ENCODE measurements at regions of chr12 and their contacts with region 1.

Region 1: DNA sequence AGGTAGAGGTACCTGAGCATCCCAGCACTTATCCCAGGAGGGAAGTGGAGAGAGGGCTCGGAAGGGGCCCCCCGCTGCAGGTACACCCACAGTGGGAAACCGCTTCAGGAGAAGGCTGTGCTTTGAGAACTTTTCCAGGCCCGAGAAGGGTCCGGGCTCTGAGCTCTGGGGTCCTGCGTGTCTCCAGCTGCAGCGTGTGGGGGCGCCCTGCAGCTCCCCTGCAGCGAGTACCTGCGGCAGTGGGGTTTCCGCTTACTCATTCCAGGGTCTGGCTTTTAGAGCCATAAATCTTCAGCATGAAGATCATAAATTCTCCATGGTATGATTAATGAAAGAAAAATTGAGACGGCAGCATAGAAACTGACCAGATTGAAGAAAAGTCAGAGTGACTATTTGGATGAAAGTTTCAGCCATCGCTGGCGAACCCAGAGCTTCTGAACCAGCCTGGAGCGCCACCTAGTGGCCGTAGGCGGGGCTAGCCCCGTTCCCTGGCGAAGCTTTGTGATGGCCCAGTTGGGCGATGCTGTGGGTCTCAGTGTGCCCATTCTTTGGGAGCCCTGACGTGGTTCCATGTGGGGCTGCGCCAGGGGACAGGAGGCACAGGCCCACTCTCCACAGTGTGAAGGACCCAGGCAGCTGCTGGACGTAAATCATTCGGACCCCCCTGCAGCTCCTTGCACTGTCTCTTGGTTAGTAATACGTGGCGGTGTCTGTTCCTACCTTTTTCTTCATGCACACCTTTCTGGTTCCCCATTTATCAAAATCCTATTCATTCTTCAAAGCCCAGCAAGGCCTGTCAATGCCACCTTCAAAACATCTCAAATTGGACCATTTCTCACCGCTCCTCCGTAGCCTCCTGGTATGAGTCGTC is 198.2 kb downstream of the TSPAN9 start:
- DNase-seq: peak; percentile 81
- ATAC-seq: peak; percentile 85
- H3K4me3 Mint-ChIP-seq: no peak overlapping the region
- H3K27ac Mint-ChIP-seq: no peak overlapping the region
- H3K4me1 Mint-ChIP-seq: peaks cover 3% of the 10 kb centered on the region
- H3K27me3 Mint-ChIP-seq: peaks cover 5% of the 10 kb centered on the region
- CTCF ChIP-seq: peak; percentile 95

Region 2: DNA sequence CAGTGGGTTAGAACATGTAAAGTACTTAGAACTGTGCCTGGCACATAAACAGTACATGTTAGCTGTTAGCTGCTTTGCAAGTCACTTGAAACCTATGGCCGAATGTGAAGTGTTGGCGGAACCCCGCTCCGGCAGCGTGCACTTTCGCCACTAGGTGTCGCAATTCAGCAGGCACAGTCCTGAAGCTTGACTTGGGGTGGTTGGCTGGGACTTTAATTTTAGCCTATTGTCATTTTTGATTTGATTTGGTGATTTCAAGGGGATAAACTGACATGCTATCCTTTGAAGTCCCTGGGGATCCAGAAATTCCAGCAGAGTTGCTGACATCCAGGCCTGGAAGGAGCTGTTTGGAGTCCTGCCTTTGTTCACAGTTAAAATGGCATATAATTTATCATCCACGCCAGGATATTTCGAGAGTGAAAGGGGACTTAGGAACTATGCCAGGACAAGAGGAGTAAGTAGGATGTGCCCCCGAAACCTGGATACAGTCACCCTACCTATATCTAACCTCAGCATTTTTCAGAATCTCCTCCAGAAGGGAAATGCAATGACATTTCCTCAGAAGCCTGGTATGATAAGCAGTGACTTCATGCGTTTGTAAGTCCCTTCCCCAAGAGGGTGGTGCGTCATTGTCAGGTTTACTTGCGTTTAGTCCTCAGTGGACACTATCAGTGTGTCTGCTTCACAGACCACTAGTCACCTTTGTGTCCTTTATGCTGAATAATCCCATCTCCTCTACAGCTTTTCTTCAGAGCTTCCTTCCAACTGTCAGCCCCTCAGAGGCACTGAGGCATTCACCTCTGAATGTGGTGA is 201.8 kb before region 1 on chr12:
- CTCF ChIA-PET with region 1: interaction called, 64 read pairs
- POLR2A ChIA-PET with region 1: no interaction called
- intact Hi-C with region 1: loop called (anchors 5 kb)
- DNase-seq: peak; percentile 89
- ATAC-seq: peak; percentile 65
- H3K4me3 Mint-ChIP-seq: no peak overlapping the region
- H3K27ac Mint-ChIP-seq: no peak overlapping the region
- H3K4me1 Mint-ChIP-seq: peaks cover 6% of the 10 kb centered on the region
- H3K27me3 Mint-ChIP-seq: peaks cover 18% of the 10 kb centered on the region
- CTCF ChIP-seq: peak; percentile 98

Region 3: DNA sequence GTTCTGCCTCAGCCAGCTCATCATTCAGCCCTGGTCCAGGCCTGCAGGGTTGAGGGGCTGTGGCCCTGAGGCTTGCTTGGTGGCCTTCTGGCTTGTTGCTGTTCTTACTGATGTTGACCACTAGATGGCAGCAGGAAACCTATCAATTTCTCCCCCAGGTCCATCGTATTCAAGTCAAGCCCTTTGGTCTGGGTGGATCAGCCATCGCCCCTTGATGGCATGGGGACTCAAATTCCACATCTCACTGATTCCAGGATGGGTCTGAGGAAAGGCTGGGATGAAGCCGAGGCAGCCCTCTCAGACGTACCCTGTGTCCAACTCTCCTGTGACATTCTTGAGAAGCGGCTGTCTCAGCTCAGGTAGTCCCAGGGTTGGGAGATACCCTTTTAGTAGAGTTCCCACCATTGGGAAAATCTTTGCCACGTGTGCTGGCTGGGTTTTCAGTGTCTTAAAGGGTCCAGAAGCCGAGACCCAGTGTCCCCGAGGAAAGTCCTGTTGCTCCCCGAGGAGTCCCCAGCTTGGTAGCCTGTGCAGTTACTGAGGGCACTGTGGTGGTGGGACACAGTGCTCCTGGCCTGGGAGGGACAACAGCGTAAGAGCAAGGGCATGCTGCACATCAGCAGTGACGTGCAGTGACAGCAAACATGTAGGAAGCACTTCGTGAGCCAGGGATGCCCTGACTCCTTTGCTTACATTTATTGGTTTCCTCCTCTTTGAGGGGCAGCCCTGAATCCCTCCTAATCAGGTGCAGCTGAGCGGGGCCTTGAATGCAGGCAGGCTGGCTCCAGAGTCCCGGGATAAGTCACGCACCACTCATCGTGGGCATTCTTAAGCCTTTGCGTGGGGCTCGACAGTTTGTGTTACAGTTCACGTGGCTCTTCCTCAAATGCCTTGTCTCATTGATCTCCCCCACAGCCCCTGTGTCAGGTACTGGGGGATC is 139.6 kb before region 1 on chr12:
- CTCF ChIA-PET with region 1: interaction called, 71 read pairs
- POLR2A ChIA-PET with region 1: no interaction called
- intact Hi-C with region 1: loop called (anchors 1 kb)
- DNase-seq: peak; percentile 49
- ATAC-seq: peak; percentile 86
- H3K4me3 Mint-ChIP-seq: no peak overlapping the region
- H3K27ac Mint-ChIP-seq: no peak overlapping the region
- H3K4me1 Mint-ChIP-seq: no peaks in the 10 kb centered on the region
- H3K27me3 Mint-ChIP-seq: peaks cover 22% of the 10 kb centered on the region
- CTCF ChIP-seq: peak; percentile 68

Region 4: GRCh38 chr12:3261782-3262359 is 13.5 kb before region 1 on chr12:
- CTCF ChIA-PET with region 1: interaction called, 14 read pairs
- POLR2A ChIA-PET with region 1: no interaction called
- intact Hi-C with region 1: no loop called
- DNase-seq: no peak
- ATAC-seq: no peak
- H3K4me3 Mint-ChIP-seq: no peak overlapping the region
- H3K27ac Mint-ChIP-seq: no peak overlapping the region
- H3K4me1 Mint-ChIP-seq: no peaks in the 10 kb centered on the region
- H3K27me3 Mint-ChIP-seq: no peaks in the 10 kb centered on the region
- CTCF ChIP-seq: no peak

Measured in activated CD8-positive, alpha-beta T cell treated with anti-CD3 and anti-CD28 coated beads for 36 hours (primary cell).